KBM-7 (cell line): ENCODE measurements at regions of chr18 and their contacts with region 1.

Region 1: GRCh38 chr18:13831864-13832508 is 8.0 kb downstream of the MC5R start:
- DNase-seq: peak; percentile 18

Region 2: DNA sequence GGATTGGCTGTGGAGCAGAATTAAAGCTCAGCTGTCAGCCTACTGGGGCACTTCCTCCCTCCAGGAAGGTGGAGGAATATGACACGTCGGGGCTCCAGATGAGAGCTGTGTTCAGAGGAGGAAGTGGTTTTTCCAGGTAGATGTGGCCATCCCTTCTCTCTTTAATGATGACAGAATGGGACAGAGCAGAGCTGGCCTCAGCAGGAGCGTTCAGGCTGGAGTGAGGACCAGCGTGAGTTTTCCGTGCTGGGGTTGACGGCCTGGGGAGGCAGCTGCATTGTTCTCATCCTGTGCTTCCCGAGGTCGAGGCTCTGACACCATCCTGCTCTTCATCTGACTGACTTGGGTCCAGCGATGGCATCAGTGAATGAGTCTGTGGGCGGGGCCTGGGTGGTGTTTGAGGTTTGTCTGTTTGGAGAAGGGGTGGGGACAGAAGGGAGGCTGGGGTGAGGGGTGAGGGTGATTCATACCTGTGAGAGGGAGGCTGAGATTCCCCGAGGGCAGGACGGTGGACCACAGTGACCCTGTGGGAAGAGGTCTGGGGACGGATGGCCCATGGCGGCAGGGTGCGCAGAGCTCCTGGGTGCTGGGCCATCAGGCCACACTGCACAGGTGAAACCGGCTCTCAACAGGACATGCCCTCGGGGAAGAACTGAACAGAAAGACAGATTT is 406.4 kb before region 1 on chr18:
- in situ Hi-C with region 1: no loop called
- DNase-seq: peak; percentile 46

Region 3: GRCh38 chr18:14086458-14087231 is 254.7 kb after region 1 on chr18:
- in situ Hi-C with region 1: loop called (anchors 25 kb)
- DNase-seq: peak; percentile 61